MCF 10A (cell line): ENCODE measurements at regions of chr10 and their contacts with region 1.

Region 1: DNA sequence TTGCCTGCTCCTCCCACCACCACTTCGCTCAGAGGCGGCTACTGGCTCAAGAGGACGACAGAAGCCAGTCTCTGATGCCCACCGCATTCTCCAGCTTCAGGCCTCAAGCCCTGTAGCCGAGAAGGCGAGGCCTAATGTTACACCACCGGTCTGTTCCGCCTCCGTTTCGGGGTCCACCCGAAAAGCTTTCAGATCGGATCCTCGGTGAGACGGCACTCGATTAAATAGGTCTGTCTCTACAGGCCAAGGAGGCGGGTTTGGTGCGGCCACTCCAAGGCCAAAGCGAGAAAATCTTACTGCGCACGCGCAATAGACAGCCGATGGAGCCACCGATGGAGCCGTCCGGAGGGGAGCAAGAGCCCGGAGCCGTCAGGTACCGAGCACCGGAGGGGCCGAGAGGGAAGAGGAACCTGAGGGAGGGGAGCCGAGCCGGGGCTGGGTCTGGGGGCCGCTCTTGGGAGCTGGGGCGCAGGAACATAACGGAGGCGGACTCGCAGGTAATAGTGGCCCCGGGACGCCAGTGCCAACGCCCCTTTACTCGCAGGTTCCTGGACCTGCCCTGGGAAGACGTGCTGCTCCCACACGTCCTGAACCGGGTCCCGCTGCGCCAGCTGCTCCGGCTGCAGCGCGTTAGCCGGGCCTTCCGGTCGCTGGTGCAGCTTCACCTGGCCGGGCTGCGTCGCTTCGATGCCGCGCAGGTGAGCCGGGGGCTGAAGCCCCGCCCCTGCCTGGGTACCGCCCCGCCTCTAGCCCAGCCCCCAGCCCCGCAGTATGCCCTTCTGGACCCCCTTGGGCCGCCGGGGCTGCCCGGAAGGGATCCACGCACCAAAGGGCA is at the start of gene FBXL15:
- DNase-seq: peak; percentile 98
- H3K4me3 Mint-ChIP-seq: peak within 1 kb of the TSS; percentile 99
- H3K27ac Mint-ChIP-seq: peak within 1 kb of the TSS; percentile 94
- H3K4me1 Mint-ChIP-seq: peaks cover 5% of the 10 kb centered on the region
- H3K27me3 Mint-ChIP-seq: peaks cover 5% of the 10 kb centered on the region
- CTCF ChIP-seq: no peak
- total RNA-seq, gene FBXL15: 11.1 and 11.3 TPM in 2 replicates

Region 2: DNA sequence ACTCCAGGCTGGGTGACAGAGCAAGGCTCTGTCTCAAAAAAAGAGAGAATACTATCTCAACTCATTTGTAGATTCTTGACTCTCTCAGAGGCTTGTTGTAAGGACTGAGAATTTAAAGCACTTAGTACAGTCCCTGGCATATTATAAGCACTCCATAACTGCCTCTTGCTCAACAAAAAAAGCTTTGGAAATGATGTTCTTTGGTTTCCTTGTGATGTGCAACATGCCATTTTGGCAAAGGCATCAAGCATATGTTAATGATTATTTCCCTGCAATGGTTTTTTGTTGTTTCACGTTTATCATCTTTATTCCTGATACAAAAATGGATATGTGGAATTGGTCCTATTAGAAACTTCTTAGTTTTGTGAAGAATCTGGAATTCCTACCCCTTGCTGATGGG is 253.2 kb before region 1 on chr10:
- CTCF ChIA-PET with region 1: interaction called, 11 read pairs
- POLR2A ChIA-PET with region 1: no interaction called
- intact Hi-C with region 1: loop called (anchors 1 kb)
- DNase-seq: no peak
- H3K4me3 Mint-ChIP-seq: no peak overlapping the region
- H3K27ac Mint-ChIP-seq: no peak overlapping the region
- H3K4me1 Mint-ChIP-seq: peaks cover 5% of the 10 kb centered on the region
- H3K27me3 Mint-ChIP-seq: peaks cover 11% of the 10 kb centered on the region
- CTCF ChIP-seq: no peak

Region 3: GRCh38 chr10:102368072-102368471 is 53.0 kb before region 1 on chr10:
- CTCF ChIA-PET with region 1: interaction called, 3 read pairs
- POLR2A ChIA-PET with region 1: interaction called, 11 read pairs
- intact Hi-C with region 1: no loop called
- DNase-seq: no peak
- H3K4me3 Mint-ChIP-seq: no peak overlapping the region
- H3K27ac Mint-ChIP-seq: peak overlapping the region; percentile 67
- H3K4me1 Mint-ChIP-seq: peaks cover 23% of the 10 kb centered on the region
- H3K27me3 Mint-ChIP-seq: no peaks in the 10 kb centered on the region
- CTCF ChIP-seq: no peak

Region 4: DNA sequence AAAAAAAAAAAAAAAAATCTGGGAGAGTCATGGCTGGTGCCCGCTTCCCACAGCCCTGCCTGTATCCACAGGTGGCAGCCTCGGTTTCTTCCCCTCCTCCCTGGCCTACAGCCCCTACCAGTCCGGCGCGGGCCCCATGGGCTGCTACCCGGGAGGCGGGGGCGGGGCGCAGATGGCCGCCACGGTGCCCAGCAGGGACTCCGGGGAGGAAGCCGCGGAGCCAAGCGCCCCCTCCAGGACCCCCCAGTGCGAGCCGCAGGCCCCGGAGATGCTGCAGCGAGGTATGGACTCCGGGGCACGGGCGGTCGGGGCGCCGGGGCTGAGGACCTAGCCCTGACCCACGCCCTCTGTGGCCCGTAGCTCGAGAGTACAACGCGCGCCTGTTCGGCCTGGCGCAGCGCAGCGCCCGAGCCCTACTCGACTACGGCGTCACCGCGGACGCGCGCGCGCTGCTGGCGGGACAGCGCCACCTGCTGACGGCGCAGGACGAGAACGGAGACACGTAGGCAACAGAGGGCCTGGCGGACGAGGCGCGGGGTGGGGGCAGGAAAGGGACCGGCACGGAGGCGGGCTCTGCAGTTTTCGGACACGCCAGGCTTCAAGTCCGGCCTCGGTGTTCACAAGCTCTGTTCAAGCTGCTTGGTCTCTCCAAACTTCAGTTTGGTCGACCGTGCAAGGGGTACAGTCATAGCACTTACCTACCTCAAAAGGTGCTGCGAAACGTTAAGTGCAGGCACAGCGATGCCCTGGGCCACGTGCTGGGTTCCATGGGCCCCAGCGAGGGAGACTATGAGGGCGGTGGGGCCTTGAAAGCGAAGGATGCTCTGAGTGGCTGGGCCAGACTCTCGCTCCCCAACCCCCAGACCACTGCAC is 21.6 kb before region 1 on chr10:
- CTCF ChIA-PET with region 1: interaction called, 137 read pairs
- POLR2A ChIA-PET with region 1: interaction called, 96 read pairs
- intact Hi-C with region 1: loop called (anchors 2 kb)
- DNase-seq: peak; percentile 75
- H3K4me3 Mint-ChIP-seq: peak overlapping the region; percentile 54
- H3K27ac Mint-ChIP-seq: no peak overlapping the region
- H3K4me1 Mint-ChIP-seq: peaks cover 23% of the 10 kb centered on the region
- H3K27me3 Mint-ChIP-seq: no peaks in the 10 kb centered on the region
- CTCF ChIP-seq: peak; percentile 92

Region 5: GRCh38 chr10:102450194-102450938 is 29.3 kb after region 1 on chr10:
- CTCF ChIA-PET with region 1: interaction called, 12 read pairs
- POLR2A ChIA-PET with region 1: interaction called, 85 read pairs
- intact Hi-C with region 1: no loop called
- DNase-seq: peak; percentile 76
- H3K4me3 Mint-ChIP-seq: peak overlapping the region; percentile 89
- H3K27ac Mint-ChIP-seq: peak overlapping the region; percentile 80
- H3K4me1 Mint-ChIP-seq: peaks cover 7% of the 10 kb centered on the region
- H3K27me3 Mint-ChIP-seq: no peaks in the 10 kb centered on the region
- CTCF ChIP-seq: no peak

Region 6: GRCh38 chr10:102480396-102480795 is 59.4 kb after region 1 on chr10:
- CTCF ChIA-PET with region 1: interaction called, 6 read pairs
- POLR2A ChIA-PET with region 1: interaction called, 7 read pairs
- intact Hi-C with region 1: loop called (anchors 1 kb)
- DNase-seq: no peak
- H3K4me3 Mint-ChIP-seq: no peak overlapping the region
- H3K27ac Mint-ChIP-seq: no peak overlapping the region
- H3K4me1 Mint-ChIP-seq: no peaks in the 10 kb centered on the region
- H3K27me3 Mint-ChIP-seq: no peaks in the 10 kb centered on the region
- CTCF ChIP-seq: no peak

Region 7: DNA sequence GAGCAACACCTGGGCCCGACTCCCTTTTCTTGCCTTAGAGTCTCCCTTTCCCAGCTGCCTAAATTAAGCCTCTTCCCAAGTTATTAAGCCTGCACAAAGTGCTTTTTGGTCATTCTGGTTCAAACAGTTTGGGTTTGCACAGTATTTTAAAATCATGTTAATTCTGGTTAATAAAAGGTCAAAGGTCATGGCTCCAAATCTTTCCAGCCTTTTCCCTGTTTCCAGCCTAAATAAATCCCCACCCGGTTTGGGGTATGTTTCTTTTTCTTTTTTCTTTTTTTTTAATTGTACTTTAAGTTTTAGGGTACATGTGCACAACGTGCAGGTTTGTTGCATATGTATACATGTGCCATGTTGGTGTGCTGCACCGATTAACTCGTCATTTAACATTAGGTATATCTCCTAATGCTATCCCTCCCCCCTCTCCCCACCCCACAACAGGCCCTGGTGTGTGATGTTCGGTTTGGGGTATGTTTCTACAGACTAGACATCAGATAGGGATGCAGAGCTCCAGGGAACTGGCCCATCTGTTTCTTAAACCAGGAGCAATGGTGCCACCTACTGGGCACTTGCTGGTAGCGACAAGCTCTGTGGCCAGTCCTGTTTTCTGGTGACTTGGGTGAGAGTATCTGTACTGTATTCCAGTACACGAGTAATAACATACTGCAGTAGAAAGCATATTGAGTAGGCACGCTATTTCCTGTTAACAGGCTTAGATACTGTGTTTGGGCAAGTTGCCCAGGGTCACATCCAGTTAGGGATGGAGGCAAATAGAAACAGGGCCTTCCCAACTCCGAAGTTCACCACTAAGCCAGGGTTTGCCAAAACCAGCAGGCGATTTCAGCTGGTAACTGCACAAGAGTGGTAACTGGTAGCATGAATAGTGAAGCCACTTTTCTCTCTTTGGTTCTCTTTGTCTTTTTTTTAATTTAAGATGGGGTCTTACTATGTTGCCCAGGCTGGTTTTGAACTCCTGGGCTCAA is 162.7 kb after region 1 on chr10:
- CTCF ChIA-PET with region 1: interaction called, 6 read pairs
- POLR2A ChIA-PET with region 1: no interaction called
- intact Hi-C with region 1: loop called (anchors 5 kb)
- DNase-seq: peak; percentile 87
- H3K4me3 Mint-ChIP-seq: no peak overlapping the region
- H3K27ac Mint-ChIP-seq: no peak overlapping the region
- H3K4me1 Mint-ChIP-seq: no peaks in the 10 kb centered on the region
- H3K27me3 Mint-ChIP-seq: no peaks in the 10 kb centered on the region
- CTCF ChIP-seq: peak; percentile 78